Activated CD4-positive, alpha-beta T cell treated with anti-CD3 and anti-CD28 coated beads for 36 hours (primary cell): ENCODE measurements at regions of chr12 and their contacts with region 1.

Region 1: DNA sequence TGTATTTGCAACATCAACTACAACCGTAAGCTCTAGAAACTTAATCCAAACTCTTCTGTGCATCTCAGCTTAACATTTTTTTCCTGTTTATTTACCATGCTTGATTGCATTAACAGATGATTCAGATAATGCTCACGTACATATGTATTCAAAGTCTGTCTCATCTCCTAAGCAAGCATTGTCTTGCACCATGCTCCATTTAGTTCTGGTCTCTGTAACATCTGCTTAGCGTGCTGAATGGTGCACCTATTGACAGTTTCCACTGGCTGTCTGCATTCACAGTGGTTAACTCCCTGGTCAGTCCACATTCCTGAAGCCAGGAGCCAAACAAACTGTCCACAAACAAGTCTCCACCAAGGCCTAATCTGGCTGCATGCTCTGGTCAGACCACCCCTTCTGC is 83.8 kb downstream of the KNTC1 start:
- DNase-seq: no peak
- ATAC-seq: no peak
- H3K4me3 Mint-ChIP-seq: no peak overlapping the region
- H3K27ac Mint-ChIP-seq: no peak overlapping the region
- H3K4me1 Mint-ChIP-seq: no peaks in the 10 kb centered on the region
- H3K27me3 Mint-ChIP-seq: no peaks in the 10 kb centered on the region

Region 2: GRCh38 chr12:122545855-122546254 is 65.0 kb before region 1 on chr12:
- CTCF ChIA-PET with region 1: no interaction called
- POLR2A ChIA-PET with region 1: no interaction called
- intact Hi-C with region 1: loop called in 1 of 2 experiments (anchors 5 kb)
- DNase-seq: no peak
- ATAC-seq: no peak
- H3K4me3 Mint-ChIP-seq: no peak overlapping the region
- H3K27ac Mint-ChIP-seq: no peak overlapping the region
- H3K4me1 Mint-ChIP-seq: no peaks in the 10 kb centered on the region
- H3K27me3 Mint-ChIP-seq: no peaks in the 10 kb centered on the region

Region 3: DNA sequence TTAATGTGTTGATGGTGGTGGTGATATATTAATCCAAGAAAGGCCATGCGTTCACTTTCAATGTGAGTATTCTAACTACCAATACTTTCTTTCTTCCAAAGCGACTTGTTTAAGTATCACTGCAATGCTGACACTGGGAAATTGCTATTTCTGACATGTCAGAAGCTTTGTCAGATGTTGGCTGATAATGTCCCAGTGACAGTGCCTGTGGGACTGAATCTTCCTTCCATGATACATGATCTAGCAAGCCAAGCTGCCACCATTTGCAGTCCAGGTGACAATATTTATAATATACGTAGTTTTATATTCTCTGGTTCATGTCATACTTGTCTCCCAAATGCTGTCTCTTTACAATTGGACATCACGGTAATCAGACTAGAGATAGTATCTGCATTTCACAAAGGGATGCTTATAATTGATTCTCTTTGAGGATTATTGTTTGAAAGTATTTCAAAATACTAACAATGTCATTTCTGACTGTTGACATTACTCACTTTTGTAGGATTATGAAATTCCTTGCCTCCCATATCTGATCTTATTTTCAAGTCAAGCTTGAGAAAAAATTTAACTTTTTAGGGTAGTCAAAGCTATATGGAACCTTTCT is 26.6 kb before region 1 on chr12:
- CTCF ChIA-PET with region 1: no interaction called
- POLR2A ChIA-PET with region 1: interaction called, 10 read pairs
- intact Hi-C with region 1: no loop called
- DNase-seq: no peak
- ATAC-seq: no peak
- H3K4me3 Mint-ChIP-seq: no peak overlapping the region
- H3K27ac Mint-ChIP-seq: no peak overlapping the region
- H3K4me1 Mint-ChIP-seq: peaks cover 2% of the 10 kb centered on the region
- H3K27me3 Mint-ChIP-seq: no peaks in the 10 kb centered on the region

Region 4: DNA sequence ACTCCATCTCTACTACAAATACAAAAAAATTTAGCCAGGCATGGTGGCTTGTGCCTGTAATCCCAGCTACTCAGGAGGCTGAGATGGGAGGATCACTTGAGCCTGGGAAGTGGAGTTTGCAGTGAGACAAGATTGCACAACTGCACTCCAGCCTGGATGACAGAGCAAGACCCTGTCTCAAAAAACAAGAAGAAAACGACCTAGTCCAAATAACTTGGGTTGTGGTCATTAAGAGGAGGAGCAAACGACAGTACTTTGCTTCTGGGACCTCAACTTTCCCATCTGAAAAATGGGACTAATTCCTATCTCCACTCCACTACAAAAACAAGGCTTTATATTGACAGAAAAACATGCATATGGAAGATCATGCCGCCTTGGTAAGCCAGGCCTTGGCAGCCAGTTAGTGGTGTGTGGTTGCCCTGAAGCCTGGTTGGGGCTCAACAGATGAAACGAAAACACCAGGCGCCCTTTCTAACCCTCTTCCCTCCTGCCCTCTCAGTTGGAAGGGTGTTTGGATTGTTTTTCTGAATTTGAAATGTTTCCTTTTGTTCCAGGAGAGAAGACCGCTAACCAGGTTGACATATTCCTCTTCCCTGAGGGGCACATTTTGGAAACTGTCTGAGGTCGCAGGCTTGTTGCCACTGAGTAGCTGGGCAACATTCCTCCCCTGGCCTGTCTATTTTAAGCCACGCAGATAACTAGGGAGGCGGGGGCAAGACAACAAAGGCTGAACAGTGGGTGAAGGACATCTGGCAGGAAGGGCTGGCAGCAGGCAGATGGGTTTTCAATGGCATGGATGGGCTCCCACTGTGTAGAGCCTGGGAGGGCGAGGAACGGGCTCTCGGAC is 298.8 kb after region 1 on chr12:
- CTCF ChIA-PET with region 1: no interaction called
- POLR2A ChIA-PET with region 1: no interaction called
- intact Hi-C with region 1: no loop called
- DNase-seq: no peak
- ATAC-seq: no peak
- H3K4me3 Mint-ChIP-seq: no peak overlapping the region
- H3K27ac Mint-ChIP-seq: no peak overlapping the region
- H3K4me1 Mint-ChIP-seq: no peaks in the 10 kb centered on the region
- H3K27me3 Mint-ChIP-seq: no peaks in the 10 kb centered on the region